ENCODE measurements at regions of chr2 and their contacts with region 1.

Region 1: DNA sequence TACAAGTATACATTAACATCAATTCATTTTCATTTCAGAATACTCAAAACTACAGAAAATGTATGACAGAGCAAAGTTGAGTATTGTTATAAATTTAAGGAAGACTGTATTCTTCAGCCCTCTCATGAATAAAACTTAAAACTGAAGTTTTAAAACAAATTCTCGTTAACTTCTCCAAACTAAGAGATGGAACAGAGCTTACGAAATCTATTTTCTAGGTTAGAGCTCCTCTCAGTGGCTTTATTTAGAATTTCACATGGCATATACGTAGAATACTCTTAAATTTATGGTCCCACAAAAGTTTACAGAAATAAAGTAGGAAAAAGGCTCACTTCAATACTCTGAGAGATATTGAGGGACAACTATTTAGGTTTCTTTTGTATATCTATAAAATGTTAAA is 612.1 kb downstream of the KCNJ3 start:
- DNase-seq: peak; percentile 10
- ATAC-seq: peak; percentile 70; the same call in 1 of the 2 replicates
- H3K4me3 ChIP-seq: no peak overlapping the region
- H3K27ac ChIP-seq: no peak overlapping the region
- H3K4me1 ChIP-seq: no peaks in the 10 kb centered on the region
- H3K27me3 ChIP-seq: no peaks in the 10 kb centered on the region
- CTCF ChIP-seq: peak; percentile 57; the same call in 1 of the 2 replicates

Region 2: DNA sequence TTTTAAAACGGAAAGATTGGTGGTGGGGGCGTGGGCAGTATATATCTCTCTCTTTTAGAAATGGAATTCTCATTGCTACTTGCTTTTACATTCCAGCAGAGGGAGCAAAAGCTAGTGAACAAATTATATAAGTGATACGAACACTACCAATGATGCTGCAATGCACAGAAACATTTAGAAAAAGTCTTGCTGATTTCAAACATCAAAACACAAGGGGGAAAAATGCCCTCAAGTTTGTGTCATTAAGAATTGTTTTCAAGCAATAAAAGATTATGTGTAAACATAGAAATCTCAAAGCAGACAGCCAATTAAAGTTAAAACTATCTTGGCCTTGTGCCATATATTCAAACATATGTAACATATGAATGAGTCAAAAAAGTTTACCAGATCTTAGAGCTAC is 908.4 kb before region 1 on chr2:
- CTCF ChIA-PET with region 1: no interaction called
- POLR2A ChIA-PET with region 1: no interaction called
- in situ Hi-C with region 1: no loop called
- intact Hi-C with region 1: loop called (anchors 5 kb)
- DNase-seq: peak; percentile 12
- ATAC-seq: no peak
- H3K4me3 ChIP-seq: no peak overlapping the region
- H3K27ac ChIP-seq: no peak overlapping the region
- H3K4me1 ChIP-seq: no peaks in the 10 kb centered on the region
- H3K27me3 ChIP-seq: no peaks in the 10 kb centered on the region
- CTCF ChIP-seq: peak; percentile 50; the same call in 1 of the 2 replicates

Region 3: GRCh38 chr2:155852156-155852555 is 541.6 kb after region 1 on chr2:
- CTCF ChIA-PET with region 1: no interaction called
- POLR2A ChIA-PET with region 1: no interaction called
- in situ Hi-C with region 1: no loop called
- intact Hi-C with region 1: no loop called
- DNase-seq: no peak
- ATAC-seq: no peak
- H3K4me3 ChIP-seq: no peak overlapping the region
- H3K27ac ChIP-seq: no peak overlapping the region
- H3K4me1 ChIP-seq: no peaks in the 10 kb centered on the region
- H3K27me3 ChIP-seq: no peaks in the 10 kb centered on the region
- CTCF ChIP-seq: no peak

Region 4: GRCh38 chr2:156565066-156565710 is 1254.6 kb after region 1 on chr2:
- CTCF ChIA-PET with region 1: no interaction called
- POLR2A ChIA-PET with region 1: no interaction called
- in situ Hi-C with region 1: no loop called
- intact Hi-C with region 1: no loop called
- DNase-seq: no peak
- ATAC-seq: no peak
- H3K4me3 ChIP-seq: no peak overlapping the region
- H3K27ac ChIP-seq: no peak overlapping the region
- H3K4me1 ChIP-seq: no peaks in the 10 kb centered on the region
- H3K27me3 ChIP-seq: no peaks in the 10 kb centered on the region
- CTCF ChIP-seq: no peak

Measured in Panc1 (cell line).